ENCODE measurements at regions of chr4 and their contacts with region 1.

Region 1: GRCh38 chr4:742742-743311 is 37.2 kb downstream of the PCGF3 start:
- DNase-seq: peak in 1 of 2 experiments; percentile 94
- H3K4me3 ChIP-seq: no peak overlapping the region
- H3K27ac ChIP-seq: no peak overlapping the region
- H3K4me1 ChIP-seq: no peaks in the 10 kb centered on the region
- H3K27me3 ChIP-seq: no peaks in the 10 kb centered on the region
- CTCF ChIP-seq: peak in 2 of 3 experiments; percentile 86 to 94; a peak in 3 of 4 replicates
- EP300 ChIP-seq: no peak
- POLR2A ChIP-seq: no peak
- RAD21 ChIP-seq: peak; percentile 88 to 91

Region 2: DNA sequence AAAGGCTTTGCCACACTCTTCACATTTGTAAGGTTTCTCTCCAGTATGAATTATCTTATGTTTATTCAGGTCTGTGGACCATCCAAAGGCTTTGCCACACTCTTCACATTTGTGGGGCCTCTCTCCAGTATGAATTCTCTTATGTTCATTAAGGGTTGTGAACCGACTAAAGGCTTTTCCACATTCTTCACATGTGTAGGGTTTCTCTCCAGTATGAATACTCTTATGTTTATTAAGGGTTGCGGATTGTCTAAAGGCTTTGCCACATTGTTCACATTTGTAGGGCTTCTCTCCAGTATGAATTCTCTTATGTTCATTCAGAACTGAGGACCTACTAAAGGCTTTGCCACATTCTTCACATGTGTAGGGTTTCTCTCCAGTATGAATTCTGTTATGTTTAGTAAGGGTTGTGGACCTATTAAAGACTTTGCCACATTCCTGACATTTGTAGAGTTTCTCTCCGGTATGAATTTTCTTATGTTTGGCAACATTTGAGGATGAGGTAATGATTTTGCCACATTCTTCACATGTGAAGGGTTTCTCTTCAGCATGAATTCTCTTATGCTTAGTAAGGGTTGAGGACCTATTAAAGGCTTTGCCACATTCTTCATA is 471.2 kb before region 1 on chr4:
- CTCF ChIA-PET with region 1: no interaction called
- POLR2A ChIA-PET with region 1: no interaction called
- DNase-seq: no peak
- H3K4me3 ChIP-seq: peak overlapping the region in 1 of 4 experiments; percentile 23; a peak in 1 of 8 replicates
- H3K27ac ChIP-seq: no peak overlapping the region
- H3K4me1 ChIP-seq: no peaks in the 10 kb centered on the region
- H3K27me3 ChIP-seq: no peaks in the 10 kb centered on the region
- CTCF ChIP-seq: no peak
- EP300 ChIP-seq: no peak
- POLR2A ChIP-seq: no peak
- RAD21 ChIP-seq: no peak

Region 3: DNA sequence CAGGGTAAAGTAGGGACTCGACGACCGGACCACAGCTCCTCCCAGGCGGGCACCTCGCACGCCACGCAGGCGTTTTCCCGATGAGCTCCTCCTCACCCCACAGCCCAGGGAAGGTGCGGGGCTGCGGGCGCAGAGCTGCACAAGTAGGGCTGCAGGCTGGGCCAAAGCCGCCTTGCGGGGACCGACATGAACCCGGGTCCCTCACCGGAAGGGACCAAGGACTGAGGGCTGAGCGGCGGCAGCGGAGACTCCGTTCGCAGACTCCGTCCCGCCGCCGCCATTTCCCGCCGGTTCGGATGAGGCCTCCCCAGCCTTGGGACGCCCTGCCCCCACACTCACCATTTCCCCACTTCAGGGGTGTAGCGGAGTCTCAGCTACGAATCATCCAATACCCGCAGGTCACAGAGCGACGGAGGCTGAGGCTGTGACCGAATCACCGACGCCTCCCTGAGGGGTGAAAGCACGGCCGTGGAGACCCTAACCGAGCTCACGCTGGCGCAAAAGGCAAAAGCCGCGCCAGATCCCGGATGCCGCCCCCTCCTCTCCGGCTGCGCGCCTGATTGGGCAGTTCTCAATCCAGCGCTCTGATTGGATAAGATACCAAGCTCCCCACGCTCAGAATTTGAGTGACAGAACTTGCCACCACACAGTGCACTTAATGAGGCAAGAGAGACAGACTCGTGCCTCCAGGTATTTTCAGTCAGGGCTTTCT is 437.7 kb before region 1 on chr4 and contains the start of gene ZNF732:
- CTCF ChIA-PET with region 1: no interaction called
- POLR2A ChIA-PET with region 1: no interaction called
- DNase-seq: peak in 1 of 2 experiments; percentile 89
- H3K4me3 ChIP-seq: peak within 1 kb of the TSS; percentile 87 to 99 (median 97)
- H3K27ac ChIP-seq: peak within 1 kb of the TSS; percentile 91
- H3K4me1 ChIP-seq: peaks cover 0 to 6% (median 3%) of the 10 kb centered on the region in 4 experiments; a peak in 4 of 7 replicates
- H3K27me3 ChIP-seq: no peaks in the 10 kb centered on the region
- CTCF ChIP-seq: no peak
- EP300 ChIP-seq: no peak
- POLR2A ChIP-seq: peak in 1 of 2 experiments; percentile 94; a peak in 2 of 3 replicates
- RAD21 ChIP-seq: no peak
- total RNA-seq, gene ZNF732: 33.3 and 35.7 TPM in 2 replicates

Region 4: GRCh38 chr4:717601-718320 is 25.1 kb before region 1 on chr4:
- CTCF ChIA-PET with region 1: interaction called, 16 read pairs
- POLR2A ChIA-PET with region 1: no interaction called
- DNase-seq: no peak
- H3K4me3 ChIP-seq: no peak overlapping the region
- H3K27ac ChIP-seq: no peak overlapping the region
- H3K4me1 ChIP-seq: no peaks in the 10 kb centered on the region
- H3K27me3 ChIP-seq: no peaks in the 10 kb centered on the region
- CTCF ChIP-seq: no peak
- EP300 ChIP-seq: no peak
- POLR2A ChIP-seq: no peak
- RAD21 ChIP-seq: no peak

Region 5: GRCh38 chr4:723751-724530 is 18.9 kb before region 1 on chr4:
- CTCF ChIA-PET with region 1: interaction called, 16 read pairs
- POLR2A ChIA-PET with region 1: interaction called, 4 read pairs
- DNase-seq: no peak
- H3K4me3 ChIP-seq: no peak overlapping the region
- H3K27ac ChIP-seq: no peak overlapping the region
- H3K4me1 ChIP-seq: no peaks in the 10 kb centered on the region
- H3K27me3 ChIP-seq: no peaks in the 10 kb centered on the region
- CTCF ChIP-seq: no peak
- EP300 ChIP-seq: no peak
- POLR2A ChIP-seq: no peak
- RAD21 ChIP-seq: no peak

Region 6: GRCh38 chr4:815464-816146 is 72.8 kb after region 1 on chr4:
- CTCF ChIA-PET with region 1: interaction called, 13 read pairs
- POLR2A ChIA-PET with region 1: no interaction called
- DNase-seq: no peak
- H3K4me3 ChIP-seq: no peak overlapping the region
- H3K27ac ChIP-seq: no peak overlapping the region
- H3K4me1 ChIP-seq: no peaks in the 10 kb centered on the region
- H3K27me3 ChIP-seq: peaks cover 7 to 73% (median 43%) of the 10 kb centered on the region in 4 experiments
- CTCF ChIP-seq: no peak
- EP300 ChIP-seq: no peak
- POLR2A ChIP-seq: no peak
- RAD21 ChIP-seq: no peak

Region 7: DNA sequence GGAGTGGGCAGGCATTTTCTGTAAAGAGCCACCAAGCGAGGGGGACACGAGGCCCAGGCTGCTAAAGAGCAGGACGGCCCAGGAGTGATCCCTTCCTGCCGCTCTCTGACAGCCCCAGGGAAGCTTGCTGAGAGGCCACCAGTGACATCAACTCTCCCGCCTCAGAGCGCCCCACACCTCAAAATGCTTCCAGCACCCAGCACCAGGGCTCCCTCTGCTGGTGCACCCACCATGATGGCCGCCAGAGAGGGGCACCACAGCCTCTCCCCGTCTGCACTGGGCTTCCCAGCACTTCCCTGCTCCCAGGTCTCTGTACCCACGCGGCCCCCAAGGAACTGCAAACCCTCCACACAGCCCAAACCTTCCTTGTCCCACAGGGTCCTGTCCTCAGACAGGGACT is 148.9 kb after region 1 on chr4:
- CTCF ChIA-PET with region 1: interaction called, 17 read pairs
- POLR2A ChIA-PET with region 1: no interaction called
- DNase-seq: peak in 1 of 2 experiments; percentile 81
- H3K4me3 ChIP-seq: no peak overlapping the region
- H3K27ac ChIP-seq: no peak overlapping the region
- H3K4me1 ChIP-seq: no peaks in the 10 kb centered on the region
- H3K27me3 ChIP-seq: no peaks in the 10 kb centered on the region
- CTCF ChIP-seq: peak in 2 of 3 experiments; percentile 75 to 76; a peak in 3 of 4 replicates
- EP300 ChIP-seq: no peak
- POLR2A ChIP-seq: no peak
- RAD21 ChIP-seq: peak; percentile 54 to 69